ENCODE measurements at regions of chr2 and their contacts with region 1.

Region 1: GRCh38 chr2:209411718-209412117 is 12.1 kb upstream of the MAP2 start:
- DNase-seq: no peak
- ATAC-seq: no peak
- H3K4me3 ChIP-seq: no peak overlapping the region
- H3K27ac ChIP-seq: no peak overlapping the region
- H3K4me1 ChIP-seq: no peaks in the 10 kb centered on the region
- H3K27me3 ChIP-seq: no peaks in the 10 kb centered on the region
- CTCF ChIP-seq: no peak
- POLR2A ChIP-seq: no peak

Region 2: GRCh38 chr2:209340522-209340921 is 71.2 kb before region 1 on chr2:
- intact Hi-C with region 1: loop called in 1 of 10 experiments (anchors 2 kb)
- DNase-seq: no peak
- ATAC-seq: no peak
- H3K4me3 ChIP-seq: no peak overlapping the region
- H3K27ac ChIP-seq: no peak overlapping the region
- H3K4me1 ChIP-seq: no peaks in the 10 kb centered on the region
- H3K27me3 ChIP-seq: peaks cover 0 to 8% (median 0%) of the 10 kb centered on the region in 9 donors
- CTCF ChIP-seq: no peak
- POLR2A ChIP-seq: no peak

Region 3: DNA sequence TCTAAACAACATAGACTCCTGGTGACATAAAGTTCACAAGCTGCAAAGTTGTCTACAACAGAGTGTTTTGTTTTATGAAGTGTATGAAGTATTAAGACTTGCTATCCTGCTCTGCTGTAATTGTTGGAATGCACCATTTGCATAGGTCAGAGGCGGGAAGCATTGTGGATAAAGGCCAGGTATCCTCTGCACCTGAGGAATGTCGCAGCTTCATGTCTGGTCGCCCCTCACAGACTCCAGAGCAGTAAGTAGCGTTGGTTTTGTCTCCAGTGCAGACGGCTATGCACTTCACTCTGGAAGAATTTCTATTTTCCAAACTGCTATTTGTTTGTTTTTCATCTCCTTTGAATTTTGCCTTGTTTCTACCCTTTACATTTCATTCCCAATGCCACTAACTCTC is 423.0 kb after region 1 on chr2:
- intact Hi-C with region 1: no loop called
- DNase-seq: no peak
- ATAC-seq: no peak
- H3K4me3 ChIP-seq: no peak overlapping the region
- H3K27ac ChIP-seq: no peak overlapping the region
- H3K4me1 ChIP-seq: no peaks in the 10 kb centered on the region
- H3K27me3 ChIP-seq: no peaks in the 10 kb centered on the region
- CTCF ChIP-seq: no peak
- POLR2A ChIP-seq: no peak

Measured in heart left ventricle (tissue), 16 donors.